T-cell (primary cell): ENCODE measurements at regions of chrX and their contacts with region 1.

Region 1: GRCh38 chrX:31178064-31178768 is 106.4 kb upstream of the FTHL17 start:
- DNase-seq: no peak
- ATAC-seq: no peak
- H3K4me3 ChIP-seq: no peak overlapping the region
- H3K4me3 Mint-ChIP-seq: no peak overlapping the region
- H3K27ac ChIP-seq: no peak overlapping the region
- H3K27ac Mint-ChIP-seq: no peak overlapping the region
- H3K4me1 ChIP-seq: no peaks in the 10 kb centered on the region
- H3K4me1 Mint-ChIP-seq: no peaks in the 10 kb centered on the region
- H3K27me3 ChIP-seq: no peaks in the 10 kb centered on the region
- H3K27me3 Mint-ChIP-seq: peaks cover 0 to 3% of the 10 kb centered on the region in 2 donors

Region 2: DNA sequence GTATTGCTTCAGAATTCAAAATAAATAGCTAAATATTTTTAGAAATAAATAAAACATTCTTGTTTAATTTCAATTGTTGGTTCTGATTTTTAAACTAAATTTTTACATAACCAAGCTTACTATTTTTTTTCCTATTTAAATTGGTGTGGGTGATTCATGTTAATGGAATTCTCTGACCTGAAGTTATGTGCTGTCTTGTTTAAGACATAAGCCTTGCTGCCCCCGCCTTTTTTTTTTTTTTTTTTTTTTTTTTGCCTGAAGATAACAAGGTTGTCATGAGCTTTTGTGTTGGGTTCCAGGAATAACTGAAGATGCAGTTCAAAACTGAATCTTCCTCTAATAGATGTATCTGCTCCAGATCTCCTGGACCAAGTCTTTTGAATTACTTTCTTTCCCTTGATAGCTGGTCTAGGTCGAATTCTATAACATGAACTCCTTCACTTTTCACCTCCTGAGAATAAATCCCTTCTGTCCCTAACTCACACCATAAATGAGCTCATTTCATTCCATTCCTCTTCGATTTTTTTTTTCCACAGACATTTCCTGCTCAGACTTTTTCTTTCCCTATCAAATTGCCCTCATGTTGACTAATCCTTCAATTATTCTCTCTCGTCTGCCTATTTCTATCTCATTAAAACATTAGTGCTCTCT is 155.1 kb after region 1 on chrX:
- CTCF ChIA-PET with region 1: no interaction called
- POLR2A ChIA-PET with region 1: interaction called in 1 of 2 experiments, 10 read pairs
- DNase-seq: no peak
- ATAC-seq: no peak
- H3K4me3 ChIP-seq: no peak overlapping the region
- H3K4me3 Mint-ChIP-seq: no peak overlapping the region
- H3K27ac ChIP-seq: no peak overlapping the region
- H3K27ac Mint-ChIP-seq: no peak overlapping the region
- H3K4me1 ChIP-seq: no peaks in the 10 kb centered on the region
- H3K4me1 Mint-ChIP-seq: no peaks in the 10 kb centered on the region
- H3K27me3 ChIP-seq: no peaks in the 10 kb centered on the region
- H3K27me3 Mint-ChIP-seq: peaks cover 0 to 17% of the 10 kb centered on the region in 2 donors

Region 3: DNA sequence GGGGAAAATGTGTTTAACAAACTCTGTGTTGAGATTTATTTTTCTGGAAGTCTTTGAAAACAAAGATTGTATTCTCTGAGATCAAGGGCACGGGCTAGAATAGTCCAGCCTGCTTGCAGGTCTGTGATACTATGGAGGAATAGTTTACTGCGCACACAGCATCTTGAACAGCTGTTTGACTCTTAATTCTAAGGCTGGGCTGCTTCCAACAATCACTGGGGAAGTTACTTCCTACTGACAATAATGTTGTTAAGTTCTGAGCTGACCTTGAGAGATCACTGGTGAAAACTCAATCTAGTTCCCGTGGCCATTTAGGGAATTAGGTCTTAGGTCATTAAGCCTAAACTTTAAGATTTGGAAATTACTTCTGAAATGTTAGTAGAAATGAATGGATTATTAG is 309.7 kb after region 1 on chrX:
- CTCF ChIA-PET with region 1: no interaction called
- POLR2A ChIA-PET with region 1: no interaction called
- DNase-seq: no peak
- ATAC-seq: no peak
- H3K4me3 ChIP-seq: no peak overlapping the region
- H3K4me3 Mint-ChIP-seq: no peak overlapping the region
- H3K27ac ChIP-seq: no peak overlapping the region
- H3K27ac Mint-ChIP-seq: no peak overlapping the region
- H3K4me1 ChIP-seq: no peaks in the 10 kb centered on the region
- H3K4me1 Mint-ChIP-seq: no peaks in the 10 kb centered on the region
- H3K27me3 ChIP-seq: no peaks in the 10 kb centered on the region
- H3K27me3 Mint-ChIP-seq: peaks cover 0 to 7% of the 10 kb centered on the region in 2 donors

Region 4: GRCh38 chrX:31702222-31702621 is 524.0 kb after region 1 on chrX:
- CTCF ChIA-PET with region 1: no interaction called
- POLR2A ChIA-PET with region 1: no interaction called
- DNase-seq: no peak
- ATAC-seq: no peak
- H3K4me3 ChIP-seq: no peak overlapping the region
- H3K4me3 Mint-ChIP-seq: no peak overlapping the region
- H3K27ac ChIP-seq: no peak overlapping the region
- H3K27ac Mint-ChIP-seq: no peak overlapping the region
- H3K4me1 ChIP-seq: no peaks in the 10 kb centered on the region
- H3K4me1 Mint-ChIP-seq: no peaks in the 10 kb centered on the region
- H3K27me3 ChIP-seq: no peaks in the 10 kb centered on the region
- H3K27me3 Mint-ChIP-seq: no peaks in the 10 kb centered on the region

Region 5: GRCh38 chrX:32483534-32484136 is 1305.4 kb after region 1 on chrX:
- CTCF ChIA-PET with region 1: no interaction called
- POLR2A ChIA-PET with region 1: no interaction called
- DNase-seq: no peak
- ATAC-seq: no peak
- H3K4me3 ChIP-seq: no peak overlapping the region
- H3K4me3 Mint-ChIP-seq: no peak overlapping the region
- H3K27ac ChIP-seq: no peak overlapping the region
- H3K27ac Mint-ChIP-seq: no peak overlapping the region
- H3K4me1 ChIP-seq: no peaks in the 10 kb centered on the region
- H3K4me1 Mint-ChIP-seq: no peaks in the 10 kb centered on the region
- H3K27me3 ChIP-seq: no peaks in the 10 kb centered on the region
- H3K27me3 Mint-ChIP-seq: peaks cover 2 to 12% of the 10 kb centered on the region in 2 donors